ENCODE measurements at regions of chr6 and their contacts with region 1.

Region 1: DNA sequence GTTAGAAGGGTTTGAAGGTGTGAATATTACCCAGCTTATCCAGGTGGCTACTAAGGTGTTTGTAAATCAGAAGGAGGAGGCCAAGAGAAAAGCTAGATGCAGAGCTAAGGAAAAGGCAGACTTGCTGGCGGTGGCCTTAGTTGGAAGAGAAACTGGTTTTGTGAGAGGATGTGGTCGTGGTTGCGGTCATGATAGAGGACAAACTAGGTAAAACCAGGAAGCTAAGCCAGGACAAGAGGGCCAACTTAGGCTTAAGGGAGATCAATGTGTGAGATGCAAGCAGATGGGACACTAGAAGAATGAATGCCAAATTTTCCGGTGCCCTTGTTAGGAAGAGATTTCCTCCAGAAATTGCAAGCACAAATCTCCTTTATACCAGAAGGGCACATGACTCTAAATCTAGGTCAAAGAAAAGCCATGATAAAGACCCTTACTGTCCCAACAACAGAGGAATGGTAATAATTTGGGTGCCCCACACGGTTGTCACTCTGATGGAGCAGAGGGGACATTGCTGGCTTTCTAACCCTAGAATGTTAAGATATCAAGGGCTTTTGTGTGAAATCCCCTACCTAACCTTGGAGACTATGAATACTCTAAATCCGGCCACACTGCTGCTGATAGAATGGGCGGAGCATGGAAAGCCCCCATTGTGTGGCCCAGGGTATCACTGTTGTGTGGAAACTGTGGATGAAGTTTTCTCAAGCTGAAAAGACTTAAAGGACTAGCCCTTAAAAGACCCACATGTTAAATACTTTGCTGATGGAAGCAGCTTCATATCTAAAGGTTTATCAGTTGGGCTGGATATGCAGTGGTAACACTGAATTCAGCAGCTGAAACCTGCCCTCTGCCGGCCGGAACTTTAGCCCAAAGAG is 7.8 kb downstream of the IL22RA2 start:
- DNase-seq: peak; percentile 67 to 77 (median 70)
- ATAC-seq: peak; percentile 48
- H3K4me3 ChIP-seq: no peak overlapping the region
- H3K27ac ChIP-seq: no peak overlapping the region
- H3K4me1 ChIP-seq: no peaks in the 10 kb centered on the region
- H3K27me3 ChIP-seq: no peaks in the 10 kb centered on the region
- CTCF ChIP-seq: peak; percentile 37 to 77 (median 60)
- POLR2A ChIP-seq: no peak

Region 2: GRCh38 chr6:137094411-137095008 is 71.1 kb before region 1 on chr6:
- intact Hi-C with region 1: loop called (anchors 5 kb)
- DNase-seq: peak; percentile 56 to 73 (median 61)
- ATAC-seq: peak; percentile 63
- H3K4me3 ChIP-seq: no peak overlapping the region
- H3K27ac ChIP-seq: no peak overlapping the region
- H3K4me1 ChIP-seq: no peaks in the 10 kb centered on the region
- H3K27me3 ChIP-seq: no peaks in the 10 kb centered on the region
- CTCF ChIP-seq: peak; percentile 55 to 81 (median 77)
- POLR2A ChIP-seq: no peak